IMR-90 (cell line): ENCODE measurements at regions of chr4 and their contacts with region 1.

Region 1: GRCh38 chr4:37389967-37390580 is 145.5 kb downstream of the NWD2 start:
- DNase-seq: peak; percentile 41
- ATAC-seq: peak; percentile 79
- H3K4me3 ChIP-seq: no peak overlapping the region
- H3K27ac ChIP-seq: no peak overlapping the region
- H3K4me1 ChIP-seq: no peaks in the 10 kb centered on the region
- H3K27me3 ChIP-seq: no peaks in the 10 kb centered on the region
- CTCF ChIP-seq: peak; percentile 66
- POLR2A ChIP-seq: no peak
- RAD21 ChIP-seq: peak; percentile 50

Region 2: GRCh38 chr4:36351082-36351666 is 1038.9 kb before region 1 on chr4:
- CTCF ChIA-PET with region 1: no interaction called
- POLR2A ChIA-PET with region 1: no interaction called
- dilution Hi-C with region 1: no loop called
- in situ Hi-C with region 1: loop called (anchors 25 kb)
- intact Hi-C with region 1: no loop called
- DNase-seq: peak; percentile 10
- ATAC-seq: no peak
- H3K4me3 ChIP-seq: no peak overlapping the region
- H3K27ac ChIP-seq: no peak overlapping the region
- H3K4me1 ChIP-seq: no peaks in the 10 kb centered on the region
- H3K27me3 ChIP-seq: no peaks in the 10 kb centered on the region
- CTCF ChIP-seq: peak; percentile 56
- POLR2A ChIP-seq: no peak
- RAD21 ChIP-seq: peak; percentile 40

Region 3: DNA sequence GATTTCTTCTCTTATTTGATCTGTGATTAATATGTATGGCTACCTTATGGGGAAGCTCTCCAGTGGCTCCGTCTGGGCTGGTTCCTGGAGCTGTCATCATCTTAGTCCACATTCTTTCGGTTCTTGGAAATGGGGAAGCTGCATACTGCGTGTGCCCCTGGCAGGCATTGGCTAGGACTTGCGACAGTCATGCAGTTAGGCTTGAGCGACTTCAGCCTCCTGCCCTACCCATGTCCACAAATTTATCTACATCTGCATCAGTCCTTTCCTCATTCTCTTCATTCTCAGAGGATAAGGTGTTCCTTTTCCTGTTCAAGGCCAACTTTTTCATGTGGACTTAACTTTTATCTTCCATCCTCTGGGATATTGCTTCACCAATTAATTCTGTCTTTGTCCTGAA is 81.9 kb after region 1 on chr4:
- CTCF ChIA-PET with region 1: no interaction called
- POLR2A ChIA-PET with region 1: no interaction called
- dilution Hi-C with region 1: no loop called
- in situ Hi-C with region 1: no loop called
- intact Hi-C with region 1: no loop called
- DNase-seq: no peak
- ATAC-seq: no peak
- H3K4me3 ChIP-seq: no peak overlapping the region
- H3K27ac ChIP-seq: no peak overlapping the region
- H3K4me1 ChIP-seq: no peaks in the 10 kb centered on the region
- H3K27me3 ChIP-seq: no peaks in the 10 kb centered on the region
- CTCF ChIP-seq: no peak
- POLR2A ChIP-seq: no peak
- RAD21 ChIP-seq: no peak